Activated T-helper 1 cell treated with anti-CD3 and anti-CD28 coated beads, Interleukin-12 subunit alpha, Interleukin-12 subunit beta, Interleukin-2, Interleukin-4 antibody, amounts not matched to agents 30 ng/mL and 10 ng/mL and 1 ng/mL, durations not matched to agents 14 hours and 24 hours and 36 hours (primary cell): ENCODE measurements at regions of chr17 and their contacts with region 1.

Region 1: DNA sequence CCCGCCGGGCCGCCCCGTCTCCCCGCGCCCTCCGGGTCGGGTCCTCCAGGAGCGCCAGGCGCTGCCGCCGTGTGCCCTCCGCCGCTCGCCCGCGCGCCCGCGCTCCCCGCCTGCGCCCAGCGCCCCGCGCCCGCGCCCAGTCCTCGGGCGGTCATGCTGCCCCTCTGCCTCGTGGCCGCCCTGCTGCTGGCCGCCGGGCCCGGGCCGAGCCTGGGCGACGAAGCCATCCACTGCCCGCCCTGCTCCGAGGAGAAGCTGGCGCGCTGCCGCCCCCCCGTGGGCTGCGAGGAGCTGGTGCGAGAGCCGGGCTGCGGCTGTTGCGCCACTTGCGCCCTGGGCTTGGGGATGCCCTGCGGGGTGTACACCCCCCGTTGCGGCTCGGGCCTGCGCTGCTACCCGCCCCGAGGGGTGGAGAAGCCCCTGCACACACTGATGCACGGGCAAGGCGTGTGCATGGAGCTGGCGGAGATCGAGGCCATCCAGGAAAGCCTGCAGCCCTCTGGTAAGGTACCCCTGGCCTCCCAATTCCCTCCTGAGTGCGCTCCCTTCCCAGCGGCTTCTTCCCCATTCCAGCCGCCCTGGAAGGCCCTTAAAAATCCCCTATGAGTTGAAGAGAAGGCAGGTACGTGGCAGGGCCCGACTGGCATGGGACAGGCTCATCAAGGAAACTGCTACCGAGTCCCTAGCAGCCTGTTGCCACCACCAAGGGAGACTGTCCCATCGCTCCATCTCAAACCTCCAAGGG is 505 bp downstream of the IGFBP4 start:
- DNase-seq: peak; percentile 63
- H3K4me3 Mint-ChIP-seq: peak overlapping the region; percentile 80
- H3K27ac Mint-ChIP-seq: peak overlapping the region; percentile 90
- H3K4me1 Mint-ChIP-seq: peaks cover 65% of the 10 kb centered on the region
- H3K27me3 Mint-ChIP-seq: peaks cover 7% of the 10 kb centered on the region

Region 2: GRCh38 chr17:40399185-40399584 is 44.6 kb before region 1 on chr17:
- intact Hi-C with region 1: loop called (anchors 1 kb)
- DNase-seq: no peak
- H3K4me3 Mint-ChIP-seq: no peak overlapping the region
- H3K27ac Mint-ChIP-seq: no peak overlapping the region
- H3K4me1 Mint-ChIP-seq: peaks cover 42% of the 10 kb centered on the region
- H3K27me3 Mint-ChIP-seq: no peaks in the 10 kb centered on the region

Region 3: GRCh38 chr17:40417609-40418427 is 25.9 kb before region 1 on chr17 and contains the start of gene TOP2A:
- intact Hi-C with region 1: loop called (anchors 1 kb)
- DNase-seq: peak; percentile 97
- H3K4me3 Mint-ChIP-seq: peak within 1 kb of the TSS; percentile 96
- H3K27ac Mint-ChIP-seq: peak within 1 kb of the TSS; percentile 92
- H3K4me1 Mint-ChIP-seq: peaks cover 35% of the 10 kb centered on the region
- H3K27me3 Mint-ChIP-seq: peaks cover 2% of the 10 kb centered on the region
- total RNA-seq, gene TOP2A: 161 and 174 TPM in 2 replicates

Region 4: GRCh38 chr17:40427002-40427491 is 16.7 kb before region 1 on chr17:
- intact Hi-C with region 1: loop called (anchors 1 kb)
- DNase-seq: no peak
- H3K4me3 Mint-ChIP-seq: peak overlapping the region; percentile 12
- H3K27ac Mint-ChIP-seq: peak overlapping the region; percentile 14
- H3K4me1 Mint-ChIP-seq: peaks cover 35% of the 10 kb centered on the region
- H3K27me3 Mint-ChIP-seq: peaks cover 37% of the 10 kb centered on the region

Region 5: GRCh38 chr17:40608061-40608588 is 164.4 kb after region 1 on chr17:
- intact Hi-C with region 1: loop called (anchors 5 kb)
- DNase-seq: peak; percentile 24
- H3K4me3 Mint-ChIP-seq: peak overlapping the region; percentile 39
- H3K27ac Mint-ChIP-seq: peak overlapping the region; percentile 93
- H3K4me1 Mint-ChIP-seq: peaks cover 93% of the 10 kb centered on the region
- H3K27me3 Mint-ChIP-seq: peaks cover 3% of the 10 kb centered on the region